ENCODE measurements at regions of chr9 and their contacts with region 1.

Region 1: DNA sequence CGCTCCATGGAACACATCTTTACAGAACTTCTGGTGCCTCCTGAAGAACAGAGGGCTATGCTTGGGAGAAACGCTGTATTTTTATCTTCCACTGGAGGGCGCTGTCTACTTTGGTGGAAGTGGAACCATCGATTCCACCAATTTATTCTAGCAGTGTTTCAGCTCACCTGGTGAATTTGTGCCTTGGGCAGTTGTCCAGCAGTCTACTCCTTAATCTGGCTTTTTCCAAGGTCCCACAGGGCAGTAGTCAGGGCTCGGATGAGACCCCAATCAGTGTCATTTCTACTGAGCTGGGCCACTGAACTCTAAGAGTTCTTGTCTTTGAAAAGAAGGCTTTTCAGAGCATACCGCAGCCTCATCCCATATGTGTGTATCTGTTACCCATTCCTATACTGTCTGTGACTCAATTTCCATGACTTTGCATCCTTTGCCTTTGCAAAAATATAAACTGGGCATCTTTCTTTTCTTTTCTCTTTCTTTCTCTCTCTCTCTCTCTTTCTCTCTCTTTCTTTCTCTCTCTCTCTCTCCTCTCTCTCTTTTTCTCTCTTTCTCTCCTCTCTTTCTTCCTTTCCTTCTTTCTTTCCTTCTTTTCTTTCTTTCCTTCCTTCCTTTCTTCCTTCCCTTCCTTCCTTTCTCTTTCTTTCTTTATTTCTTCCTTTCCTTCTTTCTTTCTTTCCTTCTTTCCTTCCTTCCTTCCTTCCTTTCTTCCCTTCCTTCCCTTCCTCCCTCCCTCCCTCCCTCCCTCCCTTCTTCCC is 138.4 kb upstream of the ZNF618 start:
- DNase-seq: peak in 2 of 5 donors; percentile 15 to 38
- ATAC-seq: no peak
- H3K4me3 ChIP-seq: no peak overlapping the region
- H3K27ac ChIP-seq: no peak overlapping the region
- H3K4me1 ChIP-seq: no peaks in the 10 kb centered on the region
- H3K27me3 ChIP-seq: peaks cover 0 to 18% (median 3%) of the 10 kb centered on the region in 9 donors
- CTCF ChIP-seq: peak; percentile 55 to 81 (median 69)
- POLR2A ChIP-seq: no peak

Region 2: DNA sequence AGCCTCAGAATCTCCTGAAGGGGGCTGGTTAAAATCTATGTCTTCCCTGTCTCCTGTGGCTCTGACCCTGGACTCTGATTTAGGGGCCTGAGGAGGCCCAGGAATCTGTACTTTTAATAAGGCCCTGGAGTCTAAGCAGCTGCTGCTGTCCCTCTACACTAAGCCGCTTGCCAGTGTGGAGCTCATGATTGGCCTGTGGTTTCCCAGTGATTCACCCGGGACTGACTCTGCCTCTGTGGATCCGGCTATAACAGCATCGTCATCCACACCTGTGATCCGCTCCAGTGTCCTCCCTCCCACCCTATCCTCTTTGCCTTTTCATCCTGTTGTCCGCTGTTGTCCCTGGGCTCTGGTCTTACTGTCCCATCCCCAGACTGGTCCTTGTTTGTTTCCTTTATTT is 583.2 kb before region 1 on chr9:
- intact Hi-C with region 1: no loop called
- DNase-seq: no peak
- ATAC-seq: no peak
- H3K4me3 ChIP-seq: peak overlapping the region in 1 of 12 donors; percentile 91
- H3K27ac ChIP-seq: peak overlapping the region in 1 of 12 donors; percentile 91
- H3K4me1 ChIP-seq: peaks cover 0 to 66% (median 14%) of the 10 kb centered on the region in 12 donors
- H3K27me3 ChIP-seq: no peaks in the 10 kb centered on the region
- CTCF ChIP-seq: no peak
- POLR2A ChIP-seq: no peak

Region 3: DNA sequence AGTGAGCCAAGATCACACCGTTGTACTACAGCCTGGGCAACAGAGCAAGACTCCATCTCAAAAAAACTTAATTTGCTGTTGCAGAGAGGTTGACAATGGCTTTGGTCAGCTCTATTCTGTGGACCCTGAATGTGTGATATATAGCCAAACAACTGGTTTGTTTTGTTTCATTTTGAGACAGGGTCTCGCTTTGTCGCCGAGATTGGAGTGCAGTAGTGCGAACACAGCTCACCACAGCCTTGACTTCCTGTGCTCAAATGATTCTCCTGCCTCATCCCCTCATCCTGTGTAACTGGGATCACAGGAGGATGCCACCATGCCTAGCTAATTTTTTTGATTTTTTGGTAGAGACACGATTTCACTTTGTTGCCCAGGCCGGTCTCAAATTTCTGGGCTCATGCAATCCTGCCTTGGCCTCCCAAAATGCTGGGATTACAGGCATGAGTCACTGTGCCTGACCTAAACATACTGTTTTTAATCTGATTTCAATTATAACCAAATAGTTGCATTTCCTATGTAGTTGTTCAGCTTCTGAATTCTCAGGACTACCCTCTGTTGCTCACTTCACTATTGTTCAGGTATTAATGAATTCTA is 444.3 kb before region 1 on chr9:
- intact Hi-C with region 1: no loop called
- DNase-seq: no peak
- ATAC-seq: no peak
- H3K4me3 ChIP-seq: no peak overlapping the region
- H3K27ac ChIP-seq: no peak overlapping the region
- H3K4me1 ChIP-seq: peaks cover 0 to 13% (median 0%) of the 10 kb centered on the region in 12 donors
- H3K27me3 ChIP-seq: no peaks in the 10 kb centered on the region
- CTCF ChIP-seq: no peak
- POLR2A ChIP-seq: no peak

Region 4: GRCh38 chr9:113715086-113715485 is 22.6 kb before region 1 on chr9:
- intact Hi-C with region 1: no loop called
- DNase-seq: no peak
- ATAC-seq: no peak
- H3K4me3 ChIP-seq: no peak overlapping the region
- H3K27ac ChIP-seq: no peak overlapping the region
- H3K4me1 ChIP-seq: peaks cover 0 to 3% (median 0%) of the 10 kb centered on the region in 12 donors
- H3K27me3 ChIP-seq: no peaks in the 10 kb centered on the region
- CTCF ChIP-seq: no peak
- POLR2A ChIP-seq: no peak

Region 5: DNA sequence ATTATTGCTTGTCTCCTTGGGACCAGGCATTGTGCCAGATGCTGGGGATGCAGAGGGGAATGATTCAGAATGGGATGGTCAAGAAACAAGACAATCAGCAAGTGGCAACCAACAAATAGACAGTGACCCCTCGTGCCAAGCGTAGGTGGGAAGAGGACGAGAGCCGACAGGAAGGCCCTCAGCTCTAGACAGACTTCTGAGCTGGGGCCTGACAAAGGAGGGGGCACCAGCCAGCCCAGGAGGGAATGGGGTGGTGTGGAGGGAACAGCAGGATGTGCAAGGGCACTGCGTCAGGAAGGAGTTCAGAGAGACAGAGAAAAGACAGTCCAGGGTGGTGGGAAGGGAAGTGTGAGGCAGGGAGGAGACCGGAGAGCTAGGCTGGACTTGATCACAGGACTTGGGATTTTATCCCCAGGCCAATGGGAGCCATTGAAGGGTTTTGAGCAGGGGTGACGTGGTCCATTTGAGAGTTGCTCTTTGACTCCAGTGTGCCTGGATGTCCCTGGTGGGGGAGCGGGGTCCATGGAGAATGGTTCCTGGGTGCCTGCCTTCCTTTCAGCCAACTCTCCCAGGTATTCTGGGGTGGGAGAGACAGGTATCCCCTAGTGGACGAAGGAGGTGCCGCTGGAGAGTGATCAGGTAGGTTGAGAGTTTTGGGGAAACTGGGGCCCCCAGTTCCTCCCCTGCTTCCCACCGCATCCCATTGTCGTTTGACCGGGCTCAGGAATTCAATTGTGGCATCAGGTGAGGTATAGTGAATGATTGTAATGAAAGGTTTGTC is 59.1 kb after region 1 on chr9:
- intact Hi-C with region 1: no loop called
- DNase-seq: no peak
- ATAC-seq: no peak
- H3K4me3 ChIP-seq: no peak overlapping the region
- H3K27ac ChIP-seq: no peak overlapping the region
- H3K4me1 ChIP-seq: no peaks in the 10 kb centered on the region
- H3K27me3 ChIP-seq: peaks cover 0 to 10% (median 0%) of the 10 kb centered on the region in 9 donors
- CTCF ChIP-seq: no peak
- POLR2A ChIP-seq: no peak

Region 6: GRCh38 chr9:113868501-113868900 is 130.8 kb after region 1 on chr9:
- intact Hi-C with region 1: loop called in 2 of 10 experiments (anchors 10 kb)
- DNase-seq: no peak
- ATAC-seq: no peak
- H3K4me3 ChIP-seq: no peak overlapping the region
- H3K27ac ChIP-seq: no peak overlapping the region
- H3K4me1 ChIP-seq: no peaks in the 10 kb centered on the region
- H3K27me3 ChIP-seq: no peaks in the 10 kb centered on the region
- CTCF ChIP-seq: no peak
- POLR2A ChIP-seq: no peak

Region 7: DNA sequence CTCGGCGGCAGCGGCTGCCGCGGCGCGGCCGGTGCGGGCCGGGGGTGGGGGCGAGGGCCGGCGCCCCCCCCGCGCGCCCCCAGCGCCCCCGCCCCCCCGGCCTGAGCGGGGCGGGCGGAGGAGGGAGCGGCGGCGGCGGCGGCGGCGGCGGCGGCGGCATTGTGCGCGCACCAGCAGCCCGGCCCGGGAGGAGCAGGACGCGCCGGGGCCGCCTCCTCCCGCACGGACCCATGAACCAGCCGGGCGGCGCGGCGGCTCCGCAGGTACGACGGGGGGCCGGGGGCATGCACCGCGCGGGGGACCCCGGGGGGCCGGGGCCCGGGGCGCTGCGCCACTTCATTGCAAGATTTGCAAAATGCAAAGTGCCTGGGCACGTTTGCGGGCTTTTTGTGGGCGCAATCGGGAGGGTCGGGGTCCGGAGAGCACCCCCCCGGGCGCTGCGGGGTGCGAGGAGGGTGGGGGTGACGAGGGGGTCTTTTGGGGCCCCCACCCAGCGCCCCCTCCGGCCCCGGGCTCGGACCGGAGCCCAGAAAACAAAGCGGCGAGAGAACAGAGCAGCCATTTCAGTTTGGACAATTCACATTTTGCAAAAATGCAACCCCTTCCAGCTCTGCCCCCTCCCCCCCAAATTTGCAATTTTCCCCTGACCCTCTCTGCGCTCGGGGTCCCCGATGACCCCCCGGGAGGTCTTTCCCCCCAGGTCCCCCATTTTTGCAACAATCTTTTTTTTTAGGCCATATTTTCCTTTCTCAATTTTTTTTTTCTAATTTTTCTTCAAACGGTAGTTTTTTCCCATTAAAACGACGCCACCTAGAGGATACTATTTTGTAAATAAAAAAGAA is 138.7 kb after region 1 on chr9 and contains the start of gene ZNF618:
- intact Hi-C with region 1: loop called in 1 of 10 experiments (anchors 10 kb)
- DNase-seq: peak; percentile 24 to 73 (median 44)
- ATAC-seq: peak in 3 of 4 donors; percentile 32 to 83 (median 64)
- H3K4me3 ChIP-seq: peak within 1 kb of the TSS; percentile 71 to 97 (median 84)
- H3K27ac ChIP-seq: peak within 1 kb of the TSS in 10 of 12 donors; percentile 39 to 86 (median 66)
- H3K4me1 ChIP-seq: peaks cover 0 to 37% (median 7%) of the 10 kb centered on the region in 12 donors
- H3K27me3 ChIP-seq: no peaks in the 10 kb centered on the region
- CTCF ChIP-seq: peak; percentile 17 to 59 (median 38)
- POLR2A ChIP-seq: no peak
- total RNA-seq, gene ZNF618: 0.81 to 4.2 (median 2.0) TPM

Region 8: GRCh38 chr9:114027159-114027895 is 289.6 kb after region 1 on chr9:
- intact Hi-C with region 1: loop called in 9 of 10 experiments (anchors 2 to 10 kb)
- DNase-seq: peak in 1 of 5 donors; percentile 9
- ATAC-seq: no peak
- H3K4me3 ChIP-seq: no peak overlapping the region
- H3K27ac ChIP-seq: no peak overlapping the region
- H3K4me1 ChIP-seq: peaks cover 0 to 4% (median 0%) of the 10 kb centered on the region in 12 donors
- H3K27me3 ChIP-seq: no peaks in the 10 kb centered on the region
- CTCF ChIP-seq: no peak
- POLR2A ChIP-seq: no peak

Region 9: GRCh38 chr9:114033397-114034103 is 295.9 kb after region 1 on chr9:
- intact Hi-C with region 1: loop called (anchors 2 to 10 kb)
- DNase-seq: peak in 4 of 5 donors; percentile 39 to 58 (median 46)
- ATAC-seq: peak; percentile 36 to 78 (median 72)
- H3K4me3 ChIP-seq: no peak overlapping the region
- H3K27ac ChIP-seq: no peak overlapping the region
- H3K4me1 ChIP-seq: peaks cover 0 to 5% (median 0%) of the 10 kb centered on the region in 12 donors
- H3K27me3 ChIP-seq: no peaks in the 10 kb centered on the region
- CTCF ChIP-seq: peak; percentile 39 to 77 (median 63)
- POLR2A ChIP-seq: no peak